Colonic mucosa (tissue), 4 donors: ENCODE measurements at regions of chr7 and their contacts with region 1.

Region 1: GRCh38 chr7:44565097-44565794 is 8.5 kb downstream of the DDX56 start:
- DNase-seq: peak; percentile 68
- H3K4me3 ChIP-seq: no peak overlapping the region
- H3K27ac ChIP-seq: no peak overlapping the region
- H3K4me1 ChIP-seq: no peaks in the 10 kb centered on the region
- H3K27me3 ChIP-seq: no peaks in the 10 kb centered on the region
- CTCF ChIP-seq: peak; percentile 99

Region 2: GRCh38 chr7:44240983-44241510 is 324.2 kb before region 1 on chr7:
- intact Hi-C with region 1: loop called (anchors 2 kb)
- DNase-seq: peak; percentile 72
- H3K4me3 ChIP-seq: no peak overlapping the region
- H3K27ac ChIP-seq: no peak overlapping the region
- H3K4me1 ChIP-seq: no peaks in the 10 kb centered on the region
- H3K27me3 ChIP-seq: no peaks in the 10 kb centered on the region
- CTCF ChIP-seq: peak; percentile 75

Region 3: DNA sequence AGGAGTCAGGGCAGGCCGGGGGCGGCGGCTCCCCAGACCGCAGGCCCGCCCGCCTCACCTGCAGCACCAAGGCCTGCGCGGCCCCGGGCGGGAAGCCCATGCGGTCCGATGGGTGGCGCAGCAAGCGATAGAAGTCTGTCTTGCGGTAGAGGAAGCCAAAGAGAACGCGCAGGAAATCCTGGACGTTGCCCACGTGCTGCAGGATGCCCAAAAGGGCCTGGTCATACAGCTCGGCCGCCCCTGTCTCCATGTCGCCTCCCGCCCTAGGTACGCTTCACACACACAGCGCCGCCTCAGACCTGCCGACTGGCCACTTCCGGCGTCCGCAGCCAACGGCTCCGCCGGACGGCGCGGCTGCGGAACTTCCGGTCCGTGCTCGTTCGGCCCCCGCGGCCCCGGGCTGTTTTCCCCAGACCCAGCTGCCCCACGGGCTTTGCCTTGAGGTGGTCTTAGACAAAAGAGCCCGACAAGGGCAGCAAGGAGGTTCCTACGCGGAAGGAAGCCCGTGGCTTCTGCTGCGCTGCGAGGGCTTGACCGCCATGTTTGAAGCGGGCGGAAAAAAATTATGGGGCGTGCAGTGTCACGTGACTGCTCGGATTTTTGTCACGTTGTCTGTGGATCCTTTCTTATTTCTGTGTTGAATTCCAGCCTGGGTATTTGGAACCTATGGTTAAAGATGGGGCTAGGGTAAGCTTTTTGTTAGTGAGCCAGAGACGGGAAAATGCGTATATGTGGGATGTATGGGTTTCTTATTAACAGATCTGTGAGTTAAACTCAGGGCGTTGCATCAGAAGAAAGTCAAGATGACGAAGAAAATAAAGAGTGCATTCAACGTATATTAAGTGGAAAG is 74.7 kb before region 1 on chr7 and contains the start of gene NUDCD3:
- intact Hi-C with region 1: loop called (anchors 5 kb)
- DNase-seq: peak; percentile 87
- H3K4me3 ChIP-seq: peak within 1 kb of the TSS; percentile 89
- H3K27ac ChIP-seq: peak within 1 kb of the TSS; percentile 90
- H3K4me1 ChIP-seq: peaks cover 9% of the 10 kb centered on the region
- H3K27me3 ChIP-seq: no peaks in the 10 kb centered on the region
- CTCF ChIP-seq: no peak
- total RNA-seq, gene NUDCD3: 77.7 to 105 TPM

Region 4: DNA sequence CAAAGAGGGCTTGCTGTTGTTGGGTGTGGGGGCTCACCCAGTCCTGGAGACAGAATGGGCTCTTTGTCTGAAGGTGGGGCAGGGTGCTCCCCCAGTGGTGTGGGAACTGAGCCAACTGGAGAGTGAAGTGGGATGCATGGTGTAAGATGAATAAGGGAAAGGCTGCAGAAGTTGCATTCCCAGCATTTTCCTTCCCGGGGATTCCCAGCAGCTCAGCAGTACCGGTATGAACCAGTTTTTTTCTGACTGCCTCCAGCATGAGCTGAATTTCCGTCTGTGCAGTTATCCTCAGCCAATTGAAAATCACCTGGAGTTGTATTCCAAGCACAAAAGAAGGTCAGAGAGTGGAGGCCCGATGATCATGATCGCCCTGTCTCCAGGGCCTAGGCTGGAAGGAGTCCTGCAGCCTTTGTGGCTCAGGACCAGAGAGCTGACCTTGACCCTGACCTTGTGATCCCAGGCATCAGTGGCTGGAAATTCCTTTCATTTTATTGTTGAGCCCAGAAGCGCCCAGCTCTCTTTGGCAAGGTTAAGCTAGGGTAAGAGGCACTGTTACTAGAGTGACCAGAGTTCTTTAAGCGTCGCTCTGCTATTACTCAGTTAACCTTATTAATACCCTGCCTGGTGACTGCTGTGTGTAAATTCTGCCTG is 74.5 kb after region 1 on chr7:
- intact Hi-C with region 1: no loop called
- DNase-seq: peak; percentile 64
- H3K4me3 ChIP-seq: no peak overlapping the region
- H3K27ac ChIP-seq: peak overlapping the region; percentile 91
- H3K4me1 ChIP-seq: peaks cover 45% of the 10 kb centered on the region
- H3K27me3 ChIP-seq: no peaks in the 10 kb centered on the region
- CTCF ChIP-seq: no peak